ENCODE measurements at regions of chr2 and their contacts with region 1.

Region 1: DNA sequence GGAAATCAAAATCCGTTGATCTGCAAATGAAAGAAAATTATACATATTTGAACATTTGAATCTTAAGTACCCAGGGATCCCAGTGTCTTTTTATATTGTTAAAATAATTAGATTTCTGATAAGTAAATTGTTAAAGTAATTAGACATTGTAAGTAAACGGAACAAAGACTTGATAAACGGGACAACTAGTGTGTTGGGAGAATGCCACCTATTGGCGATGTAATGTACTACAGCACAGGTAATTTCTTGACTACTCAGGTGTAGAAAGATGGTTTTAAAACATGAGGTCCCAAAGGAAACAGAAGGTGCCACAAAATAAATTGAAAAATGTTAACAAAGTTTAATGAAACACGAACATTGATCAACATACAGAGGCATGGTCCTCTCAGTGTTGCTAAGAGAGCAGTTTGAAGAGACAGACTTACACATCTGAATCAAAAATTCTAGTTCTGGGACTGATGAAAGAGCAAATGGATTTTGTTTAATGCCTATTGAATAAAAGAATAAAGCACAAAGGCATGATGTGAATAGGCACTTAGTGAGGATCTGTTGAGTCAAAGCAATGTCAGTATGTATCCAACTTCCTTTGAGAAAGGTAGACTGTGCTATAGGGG is 103.4 kb upstream of the RASGRP3 start:
- DNase-seq: peak in 1 of 5 donors; percentile 37
- H3K4me3 ChIP-seq: no peak overlapping the region
- H3K27ac ChIP-seq: no peak overlapping the region
- H3K4me1 ChIP-seq: peaks cover 1% of the 10 kb centered on the region
- H3K27me3 ChIP-seq: no peaks in the 10 kb centered on the region
- CTCF ChIP-seq: peak; percentile 46 to 81 (median 76)
- EP300 ChIP-seq: no peak
- POLR2A ChIP-seq: no peak

Region 2: DNA sequence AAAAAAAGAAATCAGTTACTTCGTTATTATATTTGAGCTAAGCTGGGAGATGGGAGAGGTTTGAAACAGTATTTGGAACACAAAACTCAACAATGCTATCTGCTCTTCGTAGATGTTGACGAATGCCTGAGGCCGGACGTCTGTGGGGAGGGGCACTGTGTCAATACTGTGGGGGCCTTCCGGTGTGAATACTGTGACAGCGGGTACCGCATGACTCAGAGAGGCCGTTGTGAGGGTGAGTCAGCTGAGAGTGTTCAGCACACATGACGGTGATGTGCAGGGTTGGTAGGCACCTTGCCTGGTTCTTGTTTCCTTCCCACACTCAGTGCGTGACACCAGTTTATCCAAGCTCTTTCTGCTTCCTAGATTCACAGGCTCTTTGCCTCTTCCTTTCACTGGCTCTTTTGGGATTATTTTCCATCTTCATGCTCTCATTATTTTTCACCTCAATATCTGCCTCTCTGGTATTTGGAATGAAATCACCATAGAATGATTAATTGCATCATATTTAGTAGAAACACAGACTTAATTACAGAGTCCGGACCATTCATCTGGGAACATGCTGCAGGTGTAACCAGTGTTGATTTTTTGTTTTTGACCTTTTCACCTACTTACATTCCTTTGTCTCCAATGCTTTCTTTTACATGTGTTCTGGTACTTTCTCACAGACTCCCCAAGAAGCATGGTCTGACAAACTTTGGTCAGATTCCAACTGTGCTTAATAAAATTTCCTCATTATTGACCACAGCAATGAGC is 97.2 kb before region 1 on chr2:
- intact Hi-C with region 1: loop called in 1 of 4 experiments (anchors 10 kb)
- DNase-seq: peak in 4 of 5 donors; percentile 36 to 70 (median 52)
- H3K4me3 ChIP-seq: no peak overlapping the region
- H3K27ac ChIP-seq: no peak overlapping the region
- H3K4me1 ChIP-seq: peaks cover 8% of the 10 kb centered on the region
- H3K27me3 ChIP-seq: no peaks in the 10 kb centered on the region
- CTCF ChIP-seq: no peak
- EP300 ChIP-seq: no peak
- POLR2A ChIP-seq: no peak

Region 3: GRCh38 chr2:34332813-34333212 is 959.8 kb after region 1 on chr2:
- intact Hi-C with region 1: no loop called
- DNase-seq: no peak
- H3K4me3 ChIP-seq: no peak overlapping the region
- H3K27ac ChIP-seq: no peak overlapping the region
- H3K4me1 ChIP-seq: no peaks in the 10 kb centered on the region
- H3K27me3 ChIP-seq: no peaks in the 10 kb centered on the region
- CTCF ChIP-seq: no peak
- EP300 ChIP-seq: no peak
- POLR2A ChIP-seq: no peak

Region 4: DNA sequence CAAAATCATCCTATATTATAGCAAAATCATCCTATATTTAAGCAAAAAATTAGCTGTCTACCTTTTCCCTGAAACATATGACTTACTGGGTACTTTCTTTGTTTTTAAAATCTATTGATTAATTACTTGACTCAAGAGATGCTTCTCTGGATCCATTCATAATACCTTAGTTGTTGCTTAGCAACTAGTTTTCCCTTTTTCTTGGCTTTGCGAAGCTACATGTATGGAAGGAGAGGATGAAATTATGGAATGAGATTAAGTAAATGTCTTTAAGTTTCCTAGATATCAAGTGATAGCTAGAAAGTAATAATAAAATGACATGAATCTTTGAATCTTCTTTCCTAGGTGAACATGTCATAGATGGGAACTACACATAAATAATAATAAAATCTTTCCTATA is 1259.3 kb after region 1 on chr2:
- intact Hi-C with region 1: no loop called
- DNase-seq: no peak
- H3K4me3 ChIP-seq: no peak overlapping the region
- H3K27ac ChIP-seq: no peak overlapping the region
- H3K4me1 ChIP-seq: no peaks in the 10 kb centered on the region
- H3K27me3 ChIP-seq: no peaks in the 10 kb centered on the region
- CTCF ChIP-seq: no peak
- EP300 ChIP-seq: no peak
- POLR2A ChIP-seq: no peak